HAP-1 (cell line): ENCODE measurements at regions of chr4 and their contacts with region 1.

Region 1: GRCh38 chr4:42519803-42520417 is 122.6 kb downstream of the SHISA3 start:
- DNase-seq: peak; percentile 52 to 79
- H3K4me3 ChIP-seq: no peak overlapping the region
- H3K4me1 ChIP-seq: no peaks in the 10 kb centered on the region
- H3K27me3 ChIP-seq: no peaks in the 10 kb centered on the region

Region 2: DNA sequence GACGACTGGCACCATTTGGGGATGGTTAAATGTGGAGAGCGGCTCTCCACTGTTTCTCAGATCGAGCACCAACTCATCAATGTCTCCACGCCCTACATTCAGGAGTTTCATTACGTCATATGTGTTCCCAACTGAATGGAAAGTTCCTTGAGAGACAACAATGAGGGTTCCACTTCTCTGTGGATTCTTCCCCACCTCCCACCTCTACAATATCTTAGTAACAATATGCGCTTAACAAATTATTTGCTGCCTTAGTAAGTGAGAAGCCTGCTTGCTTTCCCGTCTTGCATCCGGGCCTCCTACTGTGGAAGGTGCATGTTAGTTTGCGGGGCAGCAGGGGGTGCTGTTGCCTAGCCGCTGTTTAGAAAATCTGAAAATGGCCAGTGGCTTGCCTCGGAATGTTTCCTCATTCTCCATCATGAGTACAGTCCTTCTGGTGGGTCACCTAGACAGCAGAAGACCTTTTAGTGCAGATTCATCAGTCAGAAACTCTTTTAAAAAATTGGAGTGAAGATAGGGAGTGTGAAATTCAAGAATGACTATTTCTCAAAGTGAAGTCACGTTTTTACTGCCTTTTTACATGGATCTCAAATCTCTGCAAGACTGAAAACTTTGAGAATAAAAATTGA is 827.1 kb before region 1 on chr4:
- in situ Hi-C with region 1: loop called (anchors 25 kb)
- DNase-seq: peak; percentile 72 to 73
- H3K4me3 ChIP-seq: no peak overlapping the region
- H3K4me1 ChIP-seq: peaks cover 11% of the 10 kb centered on the region
- H3K27me3 ChIP-seq: no peaks in the 10 kb centered on the region

Region 3: DNA sequence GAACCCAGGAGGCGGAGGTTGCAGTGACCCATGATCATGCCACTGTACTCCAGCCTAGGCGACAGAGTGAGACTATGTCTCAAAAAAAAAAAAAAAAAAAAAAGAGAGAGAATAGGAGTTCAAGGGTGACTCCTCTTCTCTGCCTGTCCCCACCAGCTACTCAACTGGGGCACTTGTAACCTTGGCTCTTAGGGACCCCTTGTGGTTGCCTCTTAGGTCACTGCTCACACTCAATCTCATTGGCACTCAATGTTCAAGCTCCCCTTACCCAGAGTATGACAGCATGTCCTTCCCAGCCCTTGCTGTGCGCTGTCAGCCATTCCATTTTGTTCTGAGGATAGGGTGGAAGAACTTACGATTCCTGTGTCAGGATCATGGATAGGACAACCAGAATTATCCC is 285.1 kb before region 1 on chr4:
- in situ Hi-C with region 1: no loop called
- DNase-seq: no peak
- H3K4me3 ChIP-seq: no peak overlapping the region
- H3K4me1 ChIP-seq: no peaks in the 10 kb centered on the region
- H3K27me3 ChIP-seq: no peaks in the 10 kb centered on the region

Region 4: DNA sequence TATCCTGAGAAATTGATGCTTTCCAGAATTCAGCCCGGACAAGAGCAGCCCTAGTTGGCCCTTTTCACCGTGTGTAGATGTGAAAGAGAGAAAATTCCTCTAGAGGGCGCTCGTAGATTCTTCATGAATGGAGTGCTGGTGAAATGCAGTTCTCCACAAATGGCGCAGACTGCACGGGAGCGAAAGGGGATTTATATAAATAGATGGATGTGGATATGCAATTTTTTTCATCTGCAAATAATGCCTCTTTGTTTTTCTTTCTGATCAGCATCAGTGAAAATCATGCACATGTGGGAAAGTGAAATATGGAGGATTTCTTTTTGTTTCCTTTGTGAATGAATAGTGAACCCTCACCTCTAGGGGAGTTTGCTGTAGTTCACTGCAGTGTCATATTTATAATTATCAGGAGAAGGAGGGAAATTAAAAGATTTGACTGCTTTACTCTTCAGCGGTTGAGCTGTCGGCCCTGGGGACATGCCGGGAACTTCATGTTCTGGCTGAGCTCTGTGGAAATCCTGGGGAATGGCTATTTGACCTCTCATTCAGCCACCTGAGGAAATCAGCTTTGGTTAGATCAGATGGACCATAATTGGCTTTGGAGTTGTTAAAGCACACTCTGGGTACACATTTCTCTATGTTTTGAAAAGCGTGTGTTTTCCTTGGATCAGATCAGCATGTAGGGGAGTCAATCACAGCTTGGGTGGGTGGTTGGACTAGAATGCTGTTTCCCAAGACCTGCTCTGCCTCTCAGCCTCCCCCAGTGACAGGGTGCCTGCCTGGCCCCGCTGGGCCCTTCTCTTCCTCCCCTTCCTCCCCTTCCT is 237.6 kb before region 1 on chr4:
- in situ Hi-C with region 1: loop called (anchors 5 kb)
- DNase-seq: peak; percentile 83 to 86
- H3K4me3 ChIP-seq: no peak overlapping the region
- H3K4me1 ChIP-seq: peaks cover 10% of the 10 kb centered on the region
- H3K27me3 ChIP-seq: no peaks in the 10 kb centered on the region

Region 5: DNA sequence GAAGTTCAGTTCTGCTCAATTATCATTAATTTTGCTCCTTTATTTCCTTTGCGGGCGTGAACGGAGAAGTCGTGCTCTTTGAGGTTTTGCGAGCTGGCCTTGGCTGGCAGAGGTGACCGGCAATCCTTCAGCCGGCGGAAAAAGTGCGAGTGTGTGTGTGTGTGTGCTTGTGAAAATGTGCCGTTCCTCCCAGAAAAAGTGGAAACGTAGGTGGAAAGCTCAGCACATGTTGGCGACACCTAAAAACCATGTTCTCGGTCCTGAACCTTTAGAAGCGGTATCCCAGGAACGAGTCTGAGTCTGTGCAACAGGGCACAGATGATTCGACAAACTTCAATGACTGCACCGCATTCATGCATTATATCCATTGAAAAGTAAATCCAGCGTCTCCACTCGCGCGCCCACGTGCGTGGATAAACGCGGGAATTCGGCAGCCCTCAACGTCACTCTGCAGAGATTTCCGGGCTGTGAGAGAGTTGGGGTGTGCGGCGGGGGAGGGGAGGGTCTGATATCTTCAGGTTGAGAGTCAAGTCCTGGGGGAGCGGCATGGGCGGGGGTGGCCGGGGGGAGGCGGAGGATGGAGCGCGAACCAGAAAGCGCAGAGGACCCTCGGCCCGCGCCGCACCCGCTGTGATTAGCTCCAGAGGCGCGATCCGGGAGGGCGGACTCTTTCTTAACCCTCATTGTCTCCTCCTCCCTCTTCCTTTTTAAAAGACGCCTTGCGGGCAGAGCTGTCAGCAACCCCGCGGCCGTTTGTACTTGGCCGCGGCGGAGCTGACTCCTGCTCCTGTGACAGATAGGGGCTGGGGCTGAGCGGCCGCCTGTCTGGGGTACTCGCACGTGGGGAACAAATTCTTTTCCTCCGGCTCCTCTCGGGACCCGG is 122.9 kb before region 1 on chr4 and contains the start of gene SHISA3:
- in situ Hi-C with region 1: loop called (anchors 10 kb)
- DNase-seq: peak; percentile 86 to 92
- H3K4me3 ChIP-seq: peak within 1 kb of the TSS; percentile 75
- H3K4me1 ChIP-seq: peaks cover 14% of the 10 kb centered on the region
- H3K27me3 ChIP-seq: no peaks in the 10 kb centered on the region